PC-9 (cell line): ENCODE measurements at regions of chr12 and their contacts with region 1.

Region 1: GRCh38 chr12:104215638-104216297 is at the start of gene TXNRD1:
- DNase-seq: peak; percentile 79 to 90
- H3K4me3 ChIP-seq: peak within 1 kb of the TSS; percentile 67
- H3K27ac ChIP-seq: peak within 1 kb of the TSS; percentile 99
- H3K4me1 ChIP-seq: peaks cover 56% of the 10 kb centered on the region
- H3K27me3 ChIP-seq: no peaks in the 10 kb centered on the region
- CTCF ChIP-seq: peak; percentile 88
- total RNA-seq, gene TXNRD1: 1,205 and 1,250 TPM in 2 replicates

Region 2: GRCh38 chr12:104177663-104178501 is 37.9 kb before region 1 on chr12:
- CTCF ChIA-PET with region 1: no interaction called
- POLR2A ChIA-PET with region 1: no interaction called
- intact Hi-C with region 1: loop called (anchors 5 kb)
- DNase-seq: peak; percentile 73 to 88
- H3K4me3 ChIP-seq: peak overlapping the region; percentile 18; the same call in 1 of the 2 replicates
- H3K27ac ChIP-seq: peak overlapping the region; percentile 56
- H3K4me1 ChIP-seq: peaks cover 38% of the 10 kb centered on the region
- H3K27me3 ChIP-seq: no peaks in the 10 kb centered on the region
- CTCF ChIP-seq: peak; percentile 60; the same call in 1 of the 2 replicates

Region 3: GRCh38 chr12:104258476-104259067 is 42.8 kb after region 1 on chr12:
- CTCF ChIA-PET with region 1: interaction called, 14 read pairs
- POLR2A ChIA-PET with region 1: interaction called, 18 read pairs
- intact Hi-C with region 1: loop called (anchors 5 kb)
- DNase-seq: no peak
- H3K4me3 ChIP-seq: no peak overlapping the region
- H3K27ac ChIP-seq: peak overlapping the region; percentile 38; the same call in 1 of the 2 replicates
- H3K4me1 ChIP-seq: peaks cover 30% of the 10 kb centered on the region
- H3K27me3 ChIP-seq: no peaks in the 10 kb centered on the region
- CTCF ChIP-seq: no peak

Region 4: GRCh38 chr12:104286538-104287482 is 71.0 kb after region 1 on chr12:
- CTCF ChIA-PET with region 1: interaction called, 3 read pairs
- POLR2A ChIA-PET with region 1: interaction called, 94 read pairs
- intact Hi-C with region 1: loop called (anchors 1 kb)
- DNase-seq: peak; percentile 95 to 96
- H3K4me3 ChIP-seq: peak overlapping the region; percentile 96
- H3K27ac ChIP-seq: peak overlapping the region; percentile 99
- H3K4me1 ChIP-seq: peaks cover 43% of the 10 kb centered on the region
- H3K27me3 ChIP-seq: no peaks in the 10 kb centered on the region
- CTCF ChIP-seq: no peak

Region 5: DNA sequence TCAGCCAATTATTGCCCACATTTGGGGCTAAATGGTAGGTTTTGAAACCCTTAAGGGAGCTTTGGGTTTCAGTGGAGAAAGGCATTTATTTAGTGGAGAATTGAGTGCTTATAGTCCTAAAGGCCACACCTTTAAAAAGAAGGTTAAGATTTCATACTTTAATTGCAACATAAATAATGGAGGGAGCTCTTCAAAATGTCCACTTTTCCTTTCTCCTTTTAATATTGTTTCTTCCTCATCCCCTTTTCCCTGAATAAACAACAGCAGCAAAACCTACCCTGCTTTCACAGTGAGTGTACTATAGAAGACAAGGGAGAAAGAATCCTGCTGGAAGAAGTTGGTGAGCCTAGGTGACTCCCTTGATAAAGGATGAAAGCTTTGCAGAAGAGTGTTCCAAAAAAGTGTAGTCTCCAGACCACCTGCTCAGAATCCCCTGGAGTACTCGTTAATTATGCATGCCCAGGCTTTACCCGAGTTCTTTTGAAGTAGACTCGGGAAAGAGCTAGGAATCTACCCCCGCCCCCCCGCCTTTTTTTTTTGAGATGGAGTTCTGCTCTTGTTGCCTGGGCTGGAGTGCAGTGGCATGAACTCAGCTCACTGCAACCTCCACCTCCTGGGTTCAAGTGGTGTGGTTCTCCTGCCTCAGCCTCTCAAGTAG is 76.2 kb after region 1 on chr12:
- CTCF ChIA-PET with region 1: interaction called, 3 read pairs
- POLR2A ChIA-PET with region 1: interaction called, 94 read pairs
- intact Hi-C with region 1: no loop called
- DNase-seq: peak in 1 of 2 experiments; percentile 33
- H3K4me3 ChIP-seq: peak overlapping the region; percentile 96
- H3K27ac ChIP-seq: peak overlapping the region; percentile 99
- H3K4me1 ChIP-seq: peaks cover 26% of the 10 kb centered on the region
- H3K27me3 ChIP-seq: no peaks in the 10 kb centered on the region
- CTCF ChIP-seq: no peak

Region 6: GRCh38 chr12:104297477-104298113 is 81.8 kb after region 1 on chr12:
- CTCF ChIA-PET with region 1: interaction called, 5 read pairs
- POLR2A ChIA-PET with region 1: interaction called, 19 read pairs
- intact Hi-C with region 1: no loop called
- DNase-seq: peak in 1 of 2 experiments; percentile 76
- H3K4me3 ChIP-seq: peak overlapping the region; percentile 59
- H3K27ac ChIP-seq: peak overlapping the region; percentile 86
- H3K4me1 ChIP-seq: peaks cover 58% of the 10 kb centered on the region
- H3K27me3 ChIP-seq: no peaks in the 10 kb centered on the region
- CTCF ChIP-seq: no peak

Region 7: GRCh38 chr12:105053116-105053572 is 837.4 kb after region 1 on chr12:
- CTCF ChIA-PET with region 1: no interaction called
- POLR2A ChIA-PET with region 1: no interaction called
- intact Hi-C with region 1: no loop called
- DNase-seq: peak; percentile 65 to 70
- H3K4me3 ChIP-seq: no peak overlapping the region
- H3K27ac ChIP-seq: no peak overlapping the region
- H3K4me1 ChIP-seq: no peaks in the 10 kb centered on the region
- H3K27me3 ChIP-seq: no peaks in the 10 kb centered on the region
- CTCF ChIP-seq: peak; percentile 92